ENCODE measurements at regions of chr3 and their contacts with region 1.

Region 1: DNA sequence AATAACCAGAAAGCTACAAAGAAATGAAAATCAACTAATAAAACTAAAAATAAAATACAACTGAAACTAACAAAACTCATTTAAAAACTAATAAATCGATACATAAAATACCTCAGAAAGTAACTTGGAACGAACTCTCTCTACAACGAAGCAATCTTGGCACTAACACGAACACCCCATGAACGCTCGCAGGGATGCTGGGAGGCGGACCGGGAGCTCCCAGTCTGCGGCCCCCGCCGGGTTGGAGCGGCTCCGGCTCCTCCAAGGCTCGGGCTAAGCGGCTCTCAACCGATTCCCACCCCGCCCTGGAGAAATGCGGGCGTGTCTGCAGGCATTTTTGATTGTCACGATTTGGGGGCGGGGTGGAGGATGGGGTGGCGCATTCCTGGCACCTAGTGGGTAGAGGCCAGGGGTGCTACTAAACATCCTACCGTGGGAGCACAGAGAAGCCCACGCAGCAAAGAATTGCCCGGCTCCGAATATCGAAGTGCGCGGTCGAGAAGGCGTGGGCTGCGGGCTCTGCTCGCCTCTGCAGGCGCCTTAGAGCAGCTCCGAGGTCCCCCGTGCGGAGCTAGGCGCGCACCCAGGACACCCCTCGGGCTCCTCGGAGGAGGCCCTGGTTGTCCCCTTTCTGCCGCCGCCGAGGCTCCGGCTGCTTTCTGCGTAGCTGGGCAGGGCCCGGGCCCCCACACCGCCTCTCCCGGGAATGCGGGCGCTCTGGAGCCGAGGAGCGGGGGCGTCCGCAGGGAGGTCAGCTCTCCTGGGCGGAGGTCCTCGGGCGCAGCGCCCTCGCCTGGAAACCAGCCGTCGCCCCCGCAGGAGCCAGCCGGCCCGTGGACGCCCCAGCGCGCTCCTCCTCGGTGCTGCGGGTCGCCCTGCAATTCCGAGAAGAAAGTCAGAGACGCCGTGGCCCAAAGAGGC is 16.4 kb upstream of the LAMP3 start:
- DNase-seq: peak; percentile 17
- H3K4me3 Mint-ChIP-seq: peak overlapping the region; percentile 79
- H3K27ac Mint-ChIP-seq: peak overlapping the region; percentile 18
- H3K4me1 Mint-ChIP-seq: peaks cover 17% of the 10 kb centered on the region
- H3K27me3 Mint-ChIP-seq: peaks cover 36% of the 10 kb centered on the region

Region 2: GRCh38 chr3:182967218-182968204 is 211.4 kb before region 1 on chr3:
- intact Hi-C with region 1: loop called (anchors 10 kb)
- DNase-seq: no peak
- H3K4me3 Mint-ChIP-seq: peak overlapping the region; percentile 55
- H3K27ac Mint-ChIP-seq: peak overlapping the region; percentile 79
- H3K4me1 Mint-ChIP-seq: peaks cover 62% of the 10 kb centered on the region
- H3K27me3 Mint-ChIP-seq: no peaks in the 10 kb centered on the region

Region 3: DNA sequence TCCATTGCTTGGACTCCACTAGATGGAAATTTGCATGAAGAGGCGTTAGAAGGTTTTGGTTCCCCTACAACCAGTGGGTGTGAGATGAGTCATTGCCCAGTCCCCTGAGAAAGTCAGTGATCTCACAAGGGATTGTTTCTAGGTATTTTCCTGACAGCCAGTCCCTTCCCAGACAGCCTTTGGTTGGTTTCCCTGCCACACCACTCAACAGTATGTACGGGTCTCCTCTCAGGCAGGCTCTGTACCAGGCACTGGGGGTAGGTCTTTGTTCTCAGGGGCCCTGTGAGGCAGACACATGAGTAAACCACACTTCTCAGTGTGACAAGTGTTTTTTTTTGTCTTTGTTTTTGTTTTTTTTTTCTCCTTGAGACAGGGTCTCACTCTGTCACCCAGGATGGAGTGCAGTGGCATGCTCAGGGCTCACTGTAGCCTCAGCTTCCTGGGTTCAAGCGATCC is 20.3 kb before region 1 on chr3:
- intact Hi-C with region 1: loop called (anchors 2 kb)
- DNase-seq: peak; percentile 33
- H3K4me3 Mint-ChIP-seq: peak overlapping the region; percentile 45
- H3K27ac Mint-ChIP-seq: peak overlapping the region; percentile 73
- H3K4me1 Mint-ChIP-seq: peaks cover 48% of the 10 kb centered on the region
- H3K27me3 Mint-ChIP-seq: no peaks in the 10 kb centered on the region

Region 4: DNA sequence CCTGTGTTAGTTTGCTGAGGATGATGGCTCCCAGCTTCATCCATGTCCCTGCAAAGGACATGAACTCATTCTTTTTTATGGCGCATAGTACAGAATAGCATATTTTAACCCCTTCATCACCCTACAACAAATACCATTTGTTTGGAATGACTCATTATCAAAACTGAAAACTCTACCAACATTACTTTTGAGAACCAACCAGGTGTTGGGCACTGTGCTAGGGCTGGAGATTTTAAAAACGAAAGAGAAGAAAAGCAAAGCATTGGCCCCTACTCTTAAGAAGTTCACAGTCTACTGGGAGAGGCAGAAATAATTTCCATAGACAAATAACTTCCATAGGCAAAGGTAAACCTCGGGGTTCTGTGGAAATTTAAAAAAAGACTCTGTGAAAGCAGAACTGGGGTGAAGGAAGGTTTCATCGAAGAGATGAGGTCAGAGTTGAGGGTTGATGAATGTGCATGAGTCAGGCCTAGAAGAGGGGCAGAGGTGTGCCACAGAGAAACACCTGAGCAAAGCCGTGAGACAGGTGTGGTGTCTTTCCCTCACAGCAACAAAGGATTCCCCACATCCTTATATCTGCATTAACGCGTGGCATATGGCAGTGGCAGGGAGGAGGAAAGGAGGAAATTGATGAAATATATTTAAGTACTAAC is 198.5 kb after region 1 on chr3:
- intact Hi-C with region 1: loop called (anchors 1 kb)
- DNase-seq: no peak
- H3K4me3 Mint-ChIP-seq: no peak overlapping the region
- H3K27ac Mint-ChIP-seq: no peak overlapping the region
- H3K4me1 Mint-ChIP-seq: peaks cover 36% of the 10 kb centered on the region
- H3K27me3 Mint-ChIP-seq: no peaks in the 10 kb centered on the region

Region 5: GRCh38 chr3:183766745-183767606 is 588.1 kb after region 1 on chr3:
- intact Hi-C with region 1: loop called (anchors 1 kb)
- DNase-seq: peak; percentile 63
- H3K4me3 Mint-ChIP-seq: no peak overlapping the region
- H3K27ac Mint-ChIP-seq: no peak overlapping the region
- H3K4me1 Mint-ChIP-seq: peaks cover 7% of the 10 kb centered on the region
- H3K27me3 Mint-ChIP-seq: no peaks in the 10 kb centered on the region